ENCODE measurements at regions of chr1 and their contacts with region 1.

Region 1: DNA sequence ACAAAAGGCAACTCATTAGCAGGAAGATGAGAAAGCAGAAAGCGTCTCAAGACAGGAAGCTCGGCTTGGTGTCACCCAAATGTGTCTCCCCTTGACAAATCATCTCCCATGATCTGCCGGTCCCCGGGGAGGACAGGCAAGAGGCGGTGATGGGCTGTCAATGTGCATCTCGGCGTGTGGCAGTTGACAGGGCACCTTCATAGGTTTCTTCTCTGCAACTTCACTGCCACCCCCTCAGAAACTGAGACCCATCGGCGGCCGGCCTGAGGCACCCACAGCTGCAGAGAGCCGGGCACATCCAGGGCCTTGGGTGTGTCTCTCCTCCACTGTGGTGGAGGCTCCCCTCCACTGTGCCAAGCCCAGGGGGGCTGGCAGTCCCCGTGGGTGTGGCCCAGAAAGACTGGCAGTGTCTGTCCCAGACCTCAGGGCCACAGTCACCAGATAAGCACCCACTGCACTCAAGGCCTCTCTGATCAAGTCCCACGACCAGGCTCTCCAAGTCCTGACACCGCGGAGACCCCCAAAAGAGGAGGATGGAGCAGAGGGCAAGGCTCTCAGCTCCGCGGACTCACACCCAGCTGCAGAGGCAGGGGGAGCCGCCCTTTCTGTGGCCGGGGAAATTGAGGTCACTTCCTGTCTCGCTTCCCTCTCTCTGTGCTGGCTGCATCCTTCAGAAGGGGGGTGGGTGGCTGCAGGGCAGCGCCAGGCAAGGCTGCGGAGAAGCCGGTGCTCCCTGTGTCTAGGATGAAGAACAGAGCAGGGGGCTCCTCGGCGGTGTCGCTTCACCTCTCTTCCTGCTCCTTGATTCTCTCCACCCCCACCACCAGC is 39.6 kb upstream of the LBR start:
- DNase-seq: peak; percentile 69
- H3K4me3 ChIP-seq: peak overlapping the region in 2 of 3 experiments; percentile 0 to 2
- H3K27ac ChIP-seq: peak overlapping the region; percentile 62
- H3K4me1 ChIP-seq: peaks cover 19% of the 10 kb centered on the region
- H3K27me3 ChIP-seq: no peaks in the 10 kb centered on the region
- CTCF ChIP-seq: no peak
- POLR2A ChIP-seq: peak; percentile 78

Region 2: GRCh38 chr1:225396357-225396756 is 71.0 kb before region 1 on chr1:
- CTCF ChIA-PET with region 1: no interaction called
- POLR2A ChIA-PET with region 1: no interaction called
- dilution Hi-C with region 1: no loop called
- intact Hi-C with region 1: no loop called
- DNase-seq: no peak
- H3K4me3 ChIP-seq: no peak overlapping the region
- H3K27ac ChIP-seq: no peak overlapping the region
- H3K4me1 ChIP-seq: no peaks in the 10 kb centered on the region
- H3K27me3 ChIP-seq: no peaks in the 10 kb centered on the region
- CTCF ChIP-seq: no peak
- POLR2A ChIP-seq: no peak

Region 3: DNA sequence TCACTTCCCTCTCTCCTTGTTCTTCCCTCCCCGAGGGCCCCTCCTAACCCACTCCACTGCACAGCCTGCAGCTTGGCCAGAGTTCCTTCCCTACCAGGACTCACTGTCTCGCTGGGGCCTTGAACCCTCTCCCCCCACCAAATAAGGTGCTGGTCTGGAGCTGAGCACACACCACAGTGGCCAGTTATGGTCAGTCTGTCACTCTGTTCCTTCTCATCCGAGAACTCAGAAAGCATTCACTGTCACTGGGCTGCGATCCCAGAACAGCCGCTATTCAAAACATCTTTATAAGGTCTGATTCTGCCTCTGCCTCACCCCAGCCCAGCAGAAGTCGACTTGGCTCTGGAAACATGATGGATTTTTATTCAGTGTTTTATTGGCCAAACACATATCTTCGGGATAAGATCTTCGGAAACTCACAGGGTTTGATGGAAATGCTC is 19.7 kb before region 1 on chr1:
- CTCF ChIA-PET with region 1: interaction called, 15 read pairs
- POLR2A ChIA-PET with region 1: interaction called, 7 read pairs
- dilution Hi-C with region 1: no loop called
- intact Hi-C with region 1: loop called (anchors 1 kb)
- DNase-seq: no peak
- H3K4me3 ChIP-seq: no peak overlapping the region
- H3K27ac ChIP-seq: no peak overlapping the region
- H3K4me1 ChIP-seq: peaks cover 37% of the 10 kb centered on the region
- H3K27me3 ChIP-seq: peaks cover 2% of the 10 kb centered on the region in 2 experiments
- CTCF ChIP-seq: no peak
- POLR2A ChIP-seq: no peak

Measured in endothelial cell of umbilical vein (primary cell).